PC-9 (cell line): ENCODE measurements at regions of chr4 and their contacts with region 1.

Region 1: GRCh38 chr4:47485047-47485692 is at the start of gene ATP10D:
- DNase-seq: peak; percentile 83 to 90
- H3K4me3 ChIP-seq: peak within 1 kb of the TSS; percentile 78
- H3K27ac ChIP-seq: peak within 1 kb of the TSS; percentile 67
- H3K4me1 ChIP-seq: peaks cover 19% of the 10 kb centered on the region
- H3K27me3 ChIP-seq: no peaks in the 10 kb centered on the region
- CTCF ChIP-seq: no peak
- total RNA-seq, gene ATP10D: 29.3 and 35.2 TPM in 2 replicates

Region 2: DNA sequence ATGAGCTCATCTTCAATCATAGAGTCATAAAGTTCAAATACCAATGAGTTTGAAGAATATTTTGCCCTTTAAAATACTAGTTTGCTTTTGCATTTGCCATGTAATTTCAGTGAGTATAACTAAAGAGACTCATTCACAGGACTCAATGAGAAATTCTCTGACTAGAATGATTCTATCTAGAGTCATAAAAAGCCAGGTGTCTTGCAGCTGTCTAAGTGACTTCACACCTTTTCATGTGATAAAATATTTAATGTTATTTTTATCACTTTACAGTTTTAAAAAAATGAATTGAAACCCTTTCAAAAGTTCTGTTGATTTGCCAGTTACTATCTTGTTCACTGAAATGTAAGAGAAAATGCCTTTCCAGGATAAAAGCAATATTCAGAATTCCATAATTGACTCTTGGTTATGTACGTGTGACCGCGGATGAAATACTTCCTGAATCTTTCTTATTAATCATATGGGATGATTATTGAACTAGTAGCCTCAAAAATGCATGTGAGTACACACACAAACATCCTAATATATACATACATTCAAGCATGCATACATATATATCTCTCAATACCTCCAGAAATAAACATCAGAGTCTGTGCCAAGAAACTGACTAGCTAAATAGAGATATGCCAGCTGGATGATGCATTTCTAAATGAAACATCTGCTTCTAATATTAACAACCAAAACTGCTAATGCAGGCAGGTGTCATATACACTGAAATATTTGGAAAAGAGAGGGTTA is 366.8 kb before region 1 on chr4:
- CTCF ChIA-PET with region 1: no interaction called
- POLR2A ChIA-PET with region 1: no interaction called
- intact Hi-C with region 1: no loop called
- DNase-seq: no peak
- H3K4me3 ChIP-seq: no peak overlapping the region
- H3K27ac ChIP-seq: no peak overlapping the region
- H3K4me1 ChIP-seq: no peaks in the 10 kb centered on the region
- H3K27me3 ChIP-seq: no peaks in the 10 kb centered on the region
- CTCF ChIP-seq: no peak

Region 3: GRCh38 chr4:47427935-47428334 is 57.2 kb before region 1 on chr4:
- CTCF ChIA-PET with region 1: no interaction called
- POLR2A ChIA-PET with region 1: no interaction called
- intact Hi-C with region 1: no loop called
- DNase-seq: no peak
- H3K4me3 ChIP-seq: no peak overlapping the region
- H3K27ac ChIP-seq: no peak overlapping the region
- H3K4me1 ChIP-seq: no peaks in the 10 kb centered on the region
- H3K27me3 ChIP-seq: no peaks in the 10 kb centered on the region
- CTCF ChIP-seq: no peak

Region 4: DNA sequence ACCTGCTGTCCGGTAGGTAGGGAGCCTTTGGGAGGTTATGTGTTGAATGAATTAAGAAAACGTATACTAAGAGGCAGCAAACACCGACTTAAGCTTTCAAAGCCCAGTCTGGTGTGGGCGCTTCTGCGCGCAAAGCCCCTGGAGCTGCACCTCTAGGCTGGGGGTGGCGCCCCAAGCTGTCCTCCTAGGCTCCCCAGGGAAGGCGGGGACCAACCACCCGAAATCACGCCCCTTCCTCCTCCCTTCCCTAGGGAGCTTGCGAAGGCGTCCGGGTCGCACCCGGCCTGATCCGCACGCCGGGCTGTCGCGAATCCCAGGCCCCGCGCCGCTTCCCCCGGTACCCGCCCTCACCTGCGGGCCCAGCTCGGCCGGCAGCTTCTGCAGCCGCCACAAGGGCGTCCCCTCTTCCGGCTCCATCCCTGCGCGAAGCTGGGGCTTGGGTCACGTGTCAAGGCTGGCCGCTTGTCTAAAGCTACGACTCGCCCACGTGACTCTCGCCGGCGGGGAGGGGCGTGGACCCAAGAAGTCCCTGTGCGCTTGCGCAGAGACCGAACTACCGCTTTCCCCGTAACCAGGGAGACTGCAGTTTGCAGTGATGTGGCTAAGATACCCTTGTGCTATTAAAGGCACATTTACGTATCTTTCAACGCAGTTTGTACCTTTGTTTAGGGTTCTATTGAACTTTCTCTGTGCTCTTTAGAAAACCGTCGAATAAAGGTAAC is 21.8 kb before region 1 on chr4 and contains the start of gene COMMD8:
- CTCF ChIA-PET with region 1: no interaction called
- POLR2A ChIA-PET with region 1: interaction called, 5 read pairs
- intact Hi-C with region 1: loop called (anchors 2 kb)
- DNase-seq: peak; percentile 90 to 93
- H3K4me3 ChIP-seq: peak within 1 kb of the TSS; percentile 80
- H3K27ac ChIP-seq: peak within 1 kb of the TSS; percentile 32
- H3K4me1 ChIP-seq: peaks cover 17% of the 10 kb centered on the region
- H3K27me3 ChIP-seq: no peaks in the 10 kb centered on the region
- CTCF ChIP-seq: no peak
- total RNA-seq, gene COMMD8: 22.7 and 27.4 TPM in 2 replicates

Region 5: DNA sequence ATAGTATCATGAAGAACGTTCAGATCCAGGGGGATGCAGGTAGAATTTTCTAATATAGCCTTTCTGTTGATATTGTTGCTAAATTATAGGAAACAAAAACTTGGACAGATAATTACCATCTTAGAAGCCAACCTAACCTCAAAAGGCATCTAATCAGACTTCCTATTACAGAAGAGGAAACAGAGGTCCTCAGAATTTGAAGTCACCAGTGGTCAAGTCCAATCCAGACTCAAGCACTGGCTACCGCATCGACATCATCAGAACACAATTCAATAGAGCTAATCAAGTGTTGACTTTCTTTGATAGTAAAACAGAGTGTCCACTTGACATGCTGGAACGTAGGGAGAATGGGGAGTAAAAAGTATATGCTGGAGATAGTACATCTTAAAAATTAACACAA is 10.4 kb before region 1 on chr4:
- CTCF ChIA-PET with region 1: no interaction called
- POLR2A ChIA-PET with region 1: no interaction called
- intact Hi-C with region 1: no loop called
- DNase-seq: no peak
- H3K4me3 ChIP-seq: no peak overlapping the region
- H3K27ac ChIP-seq: no peak overlapping the region
- H3K4me1 ChIP-seq: peaks cover 9% of the 10 kb centered on the region; the same call in 1 of the 2 replicates
- H3K27me3 ChIP-seq: no peaks in the 10 kb centered on the region
- CTCF ChIP-seq: no peak

Region 6: GRCh38 chr4:47510506-47511143 is 25.5 kb after region 1 on chr4:
- CTCF ChIA-PET with region 1: no interaction called
- POLR2A ChIA-PET with region 1: interaction called, 5 read pairs
- intact Hi-C with region 1: loop called (anchors 2 kb)
- DNase-seq: peak in 1 of 2 experiments; percentile 67
- H3K4me3 ChIP-seq: no peak overlapping the region
- H3K27ac ChIP-seq: peak overlapping the region; percentile 24
- H3K4me1 ChIP-seq: peaks cover 6% of the 10 kb centered on the region; the same call in 1 of the 2 replicates
- H3K27me3 ChIP-seq: no peaks in the 10 kb centered on the region
- CTCF ChIP-seq: peak; percentile 52; the same call in 1 of the 2 replicates

Region 7: GRCh38 chr4:47531241-47531953 is 46.2 kb after region 1 on chr4:
- CTCF ChIA-PET with region 1: no interaction called
- POLR2A ChIA-PET with region 1: no interaction called
- intact Hi-C with region 1: loop called (anchors 1 kb)
- DNase-seq: peak; percentile 45 to 85
- H3K4me3 ChIP-seq: no peak overlapping the region
- H3K27ac ChIP-seq: peak overlapping the region; percentile 66
- H3K4me1 ChIP-seq: peaks cover 22% of the 10 kb centered on the region
- H3K27me3 ChIP-seq: no peaks in the 10 kb centered on the region
- CTCF ChIP-seq: no peak

Region 8: GRCh38 chr4:47551682-47552081 is 66.5 kb after region 1 on chr4:
- CTCF ChIA-PET with region 1: interaction called, 4 read pairs
- POLR2A ChIA-PET with region 1: interaction called, 23 read pairs
- intact Hi-C with region 1: loop called (anchors 2 kb)
- DNase-seq: no peak
- H3K4me3 ChIP-seq: no peak overlapping the region
- H3K27ac ChIP-seq: peak overlapping the region; percentile 18
- H3K4me1 ChIP-seq: peaks cover 53% of the 10 kb centered on the region
- H3K27me3 ChIP-seq: no peaks in the 10 kb centered on the region
- CTCF ChIP-seq: no peak

Region 9: GRCh38 chr4:47557255-47557654 is 72.1 kb after region 1 on chr4:
- CTCF ChIA-PET with region 1: interaction called, 4 read pairs
- POLR2A ChIA-PET with region 1: interaction called, 23 read pairs
- intact Hi-C with region 1: loop called (anchors 2 kb)
- DNase-seq: no peak
- H3K4me3 ChIP-seq: no peak overlapping the region
- H3K27ac ChIP-seq: no peak overlapping the region; the same call in 1 of the 2 replicates
- H3K4me1 ChIP-seq: peaks cover 45% of the 10 kb centered on the region
- H3K27me3 ChIP-seq: no peaks in the 10 kb centered on the region
- CTCF ChIP-seq: no peak